Activated CD4-positive, alpha-beta T cell treated with anti-CD3 and anti-CD28 coated beads, Interleukin-2, amount 10 ng/mL, durations not matched to agents 24 days and 14 days (primary cell): ENCODE measurements at regions of chr9 and their contacts with region 1.

Region 1: GRCh38 chr9:127199001-127199791 is 65.4 kb upstream of the GARNL3 start:
- DNase-seq: peak; percentile 94
- H3K4me3 Mint-ChIP-seq: no peak overlapping the region
- H3K27ac Mint-ChIP-seq: no peak overlapping the region
- H3K4me1 Mint-ChIP-seq: peaks cover 4% of the 10 kb centered on the region
- H3K27me3 Mint-ChIP-seq: no peaks in the 10 kb centered on the region

Region 2: DNA sequence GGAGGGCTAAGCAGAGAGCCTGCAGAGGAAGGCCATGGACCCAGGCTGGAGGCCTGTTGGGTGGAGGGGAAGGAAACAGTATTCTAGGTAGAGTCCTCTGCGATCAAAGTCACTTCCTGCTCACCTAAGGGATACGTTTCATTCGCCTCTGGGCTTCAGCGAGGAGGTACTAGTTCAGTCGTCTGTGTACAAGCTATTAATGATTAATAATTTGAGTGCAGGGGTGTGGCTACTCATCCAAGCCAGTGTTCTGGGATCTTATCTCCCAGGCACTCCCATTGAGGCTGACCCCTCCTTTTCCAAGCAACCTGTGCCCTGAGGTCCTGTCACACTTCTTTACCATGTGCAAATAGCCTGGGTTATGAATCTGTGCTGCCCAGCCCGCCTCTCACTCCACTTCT is 259.4 kb before region 1 on chr9:
- intact Hi-C with region 1: loop called (anchors 1 kb)
- DNase-seq: no peak
- H3K4me3 Mint-ChIP-seq: no peak overlapping the region
- H3K27ac Mint-ChIP-seq: no peak overlapping the region
- H3K4me1 Mint-ChIP-seq: peaks cover 4% of the 10 kb centered on the region
- H3K27me3 Mint-ChIP-seq: peaks cover 42% of the 10 kb centered on the region

Region 3: GRCh38 chr9:126965541-126966428 is 233.4 kb before region 1 on chr9:
- intact Hi-C with region 1: loop called (anchors 1 kb)
- DNase-seq: peak; percentile 84
- H3K4me3 Mint-ChIP-seq: no peak overlapping the region
- H3K27ac Mint-ChIP-seq: no peak overlapping the region
- H3K4me1 Mint-ChIP-seq: peaks cover 2% of the 10 kb centered on the region
- H3K27me3 Mint-ChIP-seq: peaks cover 18% of the 10 kb centered on the region